ENCODE measurements at regions of chr14 and their contacts with region 1.

Region 1: GRCh38 chr14:37246427-37246914 is 48.7 kb downstream of the MIPOL1 start:
- DNase-seq: peak in 1 of 2 experiments; percentile 59
- H3K4me3 ChIP-seq: no peak overlapping the region
- H3K27ac ChIP-seq: no peak overlapping the region
- H3K4me1 ChIP-seq: peaks cover 5% of the 10 kb centered on the region
- H3K27me3 ChIP-seq: no peaks in the 10 kb centered on the region
- CTCF ChIP-seq: peak; percentile 85

Region 2: DNA sequence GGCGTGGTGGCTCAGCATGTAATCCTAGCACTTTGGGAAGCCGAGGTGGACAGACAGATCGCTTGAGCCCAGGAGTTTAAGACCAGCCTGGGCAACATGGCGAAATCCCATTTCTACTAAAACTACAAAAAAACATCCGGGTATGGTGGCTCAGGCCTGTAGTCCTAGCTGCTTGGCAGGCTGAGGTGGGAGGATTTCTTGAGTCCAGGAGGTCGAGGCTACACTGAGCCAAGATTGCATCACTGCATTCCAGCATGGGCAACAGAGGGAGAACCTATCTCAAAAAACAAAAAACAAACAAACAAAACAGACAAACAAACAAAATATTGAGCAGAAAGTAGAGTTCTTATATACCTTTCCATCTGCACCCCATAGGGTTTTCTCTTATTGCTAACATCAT is 65.0 kb before region 1 on chr14:
- CTCF ChIA-PET with region 1: no interaction called
- POLR2A ChIA-PET with region 1: interaction called, 16 read pairs
- intact Hi-C with region 1: no loop called
- DNase-seq: no peak
- H3K4me3 ChIP-seq: no peak overlapping the region
- H3K27ac ChIP-seq: no peak overlapping the region
- H3K4me1 ChIP-seq: no peaks in the 10 kb centered on the region
- H3K27me3 ChIP-seq: no peaks in the 10 kb centered on the region
- CTCF ChIP-seq: no peak

Region 3: DNA sequence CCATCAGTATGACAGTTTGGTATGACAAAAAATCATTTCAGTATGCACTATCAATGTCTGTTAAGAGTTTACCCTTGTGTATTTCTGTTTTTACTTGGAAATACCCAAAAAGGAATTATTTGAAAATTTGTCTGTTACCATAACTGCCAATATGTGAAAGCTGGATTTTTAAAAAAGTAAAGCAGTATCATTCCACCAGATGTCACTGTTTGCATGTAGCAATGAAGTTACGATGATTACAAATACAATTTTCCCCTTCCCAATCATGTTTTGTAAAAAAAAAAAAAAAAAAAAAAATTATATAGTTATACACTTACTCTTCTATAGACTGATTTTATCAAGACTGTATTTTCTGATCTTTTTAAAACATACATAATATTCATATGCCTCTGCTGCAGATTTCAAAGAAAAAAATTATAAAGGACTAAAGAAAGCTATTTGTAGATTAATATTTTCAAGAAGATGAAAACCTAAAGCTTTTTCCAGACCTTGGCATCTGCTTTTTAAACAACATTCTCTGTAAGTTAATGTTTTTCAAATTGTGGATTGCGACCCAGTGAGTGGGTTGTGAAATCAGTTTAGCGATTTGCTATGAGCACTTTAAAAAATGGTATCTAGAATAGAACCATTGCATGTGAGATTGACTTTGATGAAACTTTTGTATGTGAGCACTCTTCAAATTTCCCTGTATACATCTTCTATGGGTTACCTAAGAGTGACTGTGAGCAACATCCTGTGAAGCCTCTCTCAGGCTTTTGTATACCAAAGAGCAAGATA is 463.1 kb after region 1 on chr14:
- CTCF ChIA-PET with region 1: no interaction called
- POLR2A ChIA-PET with region 1: no interaction called
- intact Hi-C with region 1: loop called (anchors 10 kb)
- DNase-seq: no peak
- H3K4me3 ChIP-seq: no peak overlapping the region
- H3K27ac ChIP-seq: no peak overlapping the region
- H3K4me1 ChIP-seq: peaks cover 8% of the 10 kb centered on the region; the same call in 1 of the 2 replicates
- H3K27me3 ChIP-seq: no peaks in the 10 kb centered on the region
- CTCF ChIP-seq: peak; percentile 53

Region 4: GRCh38 chr14:37874429-37875191 is 628.1 kb after region 1 on chr14:
- CTCF ChIA-PET with region 1: no interaction called
- POLR2A ChIA-PET with region 1: interaction called, 3 read pairs
- intact Hi-C with region 1: loop called (anchors 1 kb)
- DNase-seq: peak; percentile 51 to 76
- H3K4me3 ChIP-seq: no peak overlapping the region
- H3K27ac ChIP-seq: no peak overlapping the region
- H3K4me1 ChIP-seq: no peaks in the 10 kb centered on the region
- H3K27me3 ChIP-seq: no peaks in the 10 kb centered on the region
- CTCF ChIP-seq: peak; percentile 85

Region 5: GRCh38 chr14:38873941-38874612 is 1627.6 kb after region 1 on chr14:
- CTCF ChIA-PET with region 1: no interaction called
- POLR2A ChIA-PET with region 1: no interaction called
- intact Hi-C with region 1: loop called (anchors 10 kb)
- DNase-seq: no peak
- H3K4me3 ChIP-seq: no peak overlapping the region
- H3K27ac ChIP-seq: no peak overlapping the region
- H3K4me1 ChIP-seq: peaks cover 7% of the 10 kb centered on the region; the same call in 1 of the 2 replicates
- H3K27me3 ChIP-seq: no peaks in the 10 kb centered on the region
- CTCF ChIP-seq: no peak